Heart right ventricle (tissue), 16 donors: ENCODE measurements at regions of chr16 and their contacts with region 1.

Region 1: GRCh38 chr16:14300705-14301168 is 229.6 kb downstream of the MRTFB start:
- DNase-seq: peak; percentile 56 to 78
- ATAC-seq: peak; percentile 66 to 89 (median 78)
- H3K4me3 ChIP-seq: peak overlapping the region in 9 of 10 donors; percentile 47 to 99 (median 87)
- H3K27ac ChIP-seq: peak overlapping the region in 8 of 10 donors; percentile 70 to 92 (median 82)
- H3K4me1 ChIP-seq: peaks cover 0 to 31% (median 19%) of the 10 kb centered on the region in 9 donors
- H3K27me3 ChIP-seq: peaks cover 0 to 49% (median 0%) of the 10 kb centered on the region in 7 donors
- CTCF ChIP-seq: peak; percentile 14 to 72 (median 61)

Region 2: GRCh38 chr16:14399378-14400284 is 98.9 kb after region 1 on chr16:
- intact Hi-C with region 1: loop called in 2 of 10 experiments (anchors 5 to 10 kb)
- DNase-seq: peak; percentile 25 to 29
- ATAC-seq: peak; percentile 89 to 96 (median 94)
- H3K4me3 ChIP-seq: no peak overlapping the region
- H3K27ac ChIP-seq: peak overlapping the region; percentile 1 to 84 (median 72)
- H3K4me1 ChIP-seq: peaks cover 4 to 19% (median 14%) of the 10 kb centered on the region in 9 donors
- H3K27me3 ChIP-seq: no peaks in the 10 kb centered on the region
- CTCF ChIP-seq: no peak

Region 3: GRCh38 chr16:14405611-14406537 is 105.1 kb after region 1 on chr16:
- intact Hi-C with region 1: loop called in 1 of 10 experiments (anchors 10 kb)
- DNase-seq: peak in 1 of 2 donors; percentile 19
- ATAC-seq: peak in 3 of 8 donors; percentile 36 to 54 (median 49)
- H3K4me3 ChIP-seq: no peak overlapping the region
- H3K27ac ChIP-seq: no peak overlapping the region
- H3K4me1 ChIP-seq: peaks cover 0 to 4% (median 0%) of the 10 kb centered on the region in 9 donors
- H3K27me3 ChIP-seq: no peaks in the 10 kb centered on the region
- CTCF ChIP-seq: no peak

Region 4: GRCh38 chr16:14486520-14487303 is 186.0 kb after region 1 on chr16:
- intact Hi-C with region 1: loop called in 4 of 10 experiments (anchors 2 to 10 kb)
- DNase-seq: peak; percentile 53 to 87
- ATAC-seq: peak; percentile 85 to 89 (median 86)
- H3K4me3 ChIP-seq: peak overlapping the region in 9 of 10 donors; percentile 29 to 52 (median 48)
- H3K27ac ChIP-seq: peak overlapping the region; percentile 69 to 89 (median 79)
- H3K4me1 ChIP-seq: peaks cover 0 to 57% (median 32%) of the 10 kb centered on the region in 9 donors
- H3K27me3 ChIP-seq: no peaks in the 10 kb centered on the region
- CTCF ChIP-seq: no peak

Region 5: DNA sequence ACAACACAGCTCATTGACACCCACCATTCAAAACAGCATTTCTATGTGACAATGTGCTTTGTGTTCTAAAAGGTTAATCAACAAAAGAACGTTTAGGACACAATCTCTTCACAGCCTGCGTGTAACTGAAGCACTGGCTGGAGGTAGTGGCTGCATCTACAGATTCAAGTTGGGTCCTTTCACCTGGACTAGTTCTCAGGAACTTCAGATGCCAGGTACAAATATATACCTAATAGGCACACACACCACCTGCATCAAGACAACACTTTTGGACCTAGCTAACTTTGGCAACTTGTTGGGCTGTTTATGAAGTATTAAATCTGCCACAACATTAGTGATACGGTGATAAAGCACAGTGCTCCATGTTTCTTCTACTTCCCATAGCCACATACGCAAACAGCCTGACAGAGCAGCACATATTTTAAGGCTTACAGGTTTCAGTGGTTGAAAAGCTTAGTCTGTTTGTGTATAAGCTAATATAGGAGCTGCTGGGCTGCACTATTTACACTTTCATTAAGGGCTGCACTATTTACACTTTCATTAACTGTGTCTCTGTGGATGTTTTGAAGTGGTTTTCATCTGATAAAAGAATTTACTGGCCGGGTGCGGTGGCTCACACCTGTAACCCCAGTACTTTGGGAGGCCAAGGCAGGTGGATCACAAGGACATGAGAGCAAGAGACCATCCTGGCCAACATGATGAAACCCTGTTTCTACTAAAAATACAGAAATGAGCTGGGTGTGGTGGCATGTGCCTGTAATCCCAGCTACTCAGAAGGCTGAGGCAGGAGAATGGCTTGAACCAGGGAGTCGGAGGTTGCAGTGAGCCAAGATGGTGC is 196.7 kb after region 1 on chr16:
- intact Hi-C with region 1: loop called in 1 of 10 experiments (anchors 10 kb)
- DNase-seq: no peak
- ATAC-seq: no peak
- H3K4me3 ChIP-seq: no peak overlapping the region
- H3K27ac ChIP-seq: peak overlapping the region; percentile 3 to 77 (median 39)
- H3K4me1 ChIP-seq: peaks cover 0 to 58% (median 42%) of the 10 kb centered on the region in 9 donors
- H3K27me3 ChIP-seq: no peaks in the 10 kb centered on the region
- CTCF ChIP-seq: no peak